ENCODE measurements at regions of chr1 and their contacts with region 1.

Region 1: DNA sequence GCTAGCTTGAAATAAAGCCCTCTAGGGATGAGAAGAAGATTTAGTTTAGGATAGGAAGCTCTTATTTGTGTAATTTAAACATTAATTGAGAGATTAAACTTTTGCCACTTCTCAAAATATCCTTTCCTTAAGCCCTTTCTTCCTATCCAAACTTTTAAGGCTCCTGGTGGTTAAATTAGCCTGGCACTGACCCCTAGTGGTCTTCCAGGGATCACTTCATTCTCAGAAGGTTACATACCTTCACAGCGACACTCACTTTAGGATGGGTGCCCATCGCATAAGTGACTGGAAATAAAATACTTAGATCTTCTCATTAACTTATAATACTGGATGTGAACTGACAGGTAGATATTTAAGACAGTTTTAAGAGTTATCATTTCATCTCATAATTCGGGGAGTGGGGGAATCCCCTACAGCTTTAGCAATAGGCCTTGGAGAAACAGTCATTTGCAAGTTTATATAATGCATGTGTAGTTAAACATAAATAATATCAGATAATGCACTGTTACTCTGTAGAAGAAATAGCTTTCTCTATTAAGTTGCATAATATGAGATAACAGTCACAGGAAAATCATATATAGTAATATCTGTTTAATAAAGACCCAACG is 7.4 kb downstream of the LHX9 start:
- DNase-seq: peak; percentile 77
- H3K4me3 Mint-ChIP-seq: no peak overlapping the region
- H3K27ac Mint-ChIP-seq: no peak overlapping the region
- H3K4me1 Mint-ChIP-seq: peaks cover 16% of the 10 kb centered on the region
- H3K27me3 Mint-ChIP-seq: peaks cover 80% of the 10 kb centered on the region

Region 2: GRCh38 chr1:197521118-197521739 is 403.4 kb before region 1 on chr1:
- intact Hi-C with region 1: loop called (anchors 1 kb)
- DNase-seq: peak; percentile 81
- H3K4me3 Mint-ChIP-seq: no peak overlapping the region
- H3K27ac Mint-ChIP-seq: no peak overlapping the region
- H3K4me1 Mint-ChIP-seq: peaks cover 5% of the 10 kb centered on the region
- H3K27me3 Mint-ChIP-seq: no peaks in the 10 kb centered on the region

Region 3: GRCh38 chr1:197614916-197615692 is 309.5 kb before region 1 on chr1:
- intact Hi-C with region 1: loop called (anchors 1 kb)
- DNase-seq: peak; percentile 70
- H3K4me3 Mint-ChIP-seq: no peak overlapping the region
- H3K27ac Mint-ChIP-seq: no peak overlapping the region
- H3K4me1 Mint-ChIP-seq: no peaks in the 10 kb centered on the region
- H3K27me3 Mint-ChIP-seq: no peaks in the 10 kb centered on the region

Region 4: GRCh38 chr1:198275597-198275996 is 351.0 kb after region 1 on chr1:
- intact Hi-C with region 1: loop called (anchors 10 kb)
- DNase-seq: no peak
- H3K4me3 Mint-ChIP-seq: no peak overlapping the region
- H3K27ac Mint-ChIP-seq: no peak overlapping the region
- H3K4me1 Mint-ChIP-seq: peaks cover 1% of the 10 kb centered on the region
- H3K27me3 Mint-ChIP-seq: no peaks in the 10 kb centered on the region